Left cardiac atrium (tissue), 4 donors: ENCODE measurements at regions of chr1 and their contacts with region 1.

Region 1: DNA sequence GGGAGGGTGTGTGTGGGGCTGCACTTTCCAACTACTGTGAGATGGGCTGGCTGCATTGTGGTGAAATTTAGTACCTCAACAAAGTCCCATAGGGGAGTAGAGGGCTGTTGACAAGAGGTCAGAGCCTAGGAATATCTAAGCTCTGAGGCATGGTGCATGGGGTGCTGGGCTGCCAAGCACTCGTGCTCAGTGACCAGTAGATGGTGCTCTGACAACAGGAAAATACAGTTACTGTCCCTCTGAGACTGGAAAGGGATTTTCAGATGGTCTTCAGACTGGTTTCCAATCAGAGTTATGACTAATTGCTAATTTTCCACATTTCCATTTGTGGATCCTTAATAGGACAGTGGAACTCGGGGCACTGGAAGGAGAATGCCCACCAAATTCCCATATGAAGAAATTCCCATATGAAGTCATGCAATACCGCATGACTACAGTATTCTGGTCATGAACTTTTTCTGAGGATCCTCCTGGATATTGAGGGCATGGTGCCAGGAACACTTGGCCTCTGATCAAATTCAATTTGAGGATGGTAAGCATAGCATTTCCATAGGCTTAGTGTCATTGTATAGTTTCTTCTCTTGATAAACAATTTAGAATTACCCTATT is 4.1 kb upstream of the CACNA1E start:
- DNase-seq: peak; percentile 43
- ATAC-seq: peak; percentile 88 to 91

Region 2: GRCh38 chr1:181250038-181250437 is 229.2 kb before region 1 on chr1:
- intact Hi-C with region 1: no loop called
- DNase-seq: no peak
- ATAC-seq: no peak

Region 3: DNA sequence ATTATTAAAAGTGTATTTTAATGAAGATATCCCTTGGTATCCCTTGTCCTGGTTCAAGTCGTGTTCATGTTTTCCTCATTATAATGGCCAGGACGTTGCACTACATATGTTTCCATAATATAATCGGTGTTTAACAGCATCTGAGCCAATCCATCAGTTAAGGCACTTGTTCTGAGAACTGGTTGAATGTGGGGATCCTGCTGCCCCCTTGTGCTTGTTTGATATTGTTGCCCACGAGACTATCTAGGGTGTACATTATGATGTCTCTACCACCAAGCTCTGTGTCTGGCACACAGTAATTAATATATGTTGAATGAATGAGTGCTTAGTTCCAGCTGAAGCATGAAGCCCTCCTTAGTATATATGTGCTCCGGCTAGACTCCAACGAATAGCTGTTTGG is 197.0 kb after region 1 on chr1:
- intact Hi-C with region 1: loop called (anchors 1 to 5 kb)
- DNase-seq: no peak
- ATAC-seq: peak in 1 of 2 donors; percentile 38

Region 4: DNA sequence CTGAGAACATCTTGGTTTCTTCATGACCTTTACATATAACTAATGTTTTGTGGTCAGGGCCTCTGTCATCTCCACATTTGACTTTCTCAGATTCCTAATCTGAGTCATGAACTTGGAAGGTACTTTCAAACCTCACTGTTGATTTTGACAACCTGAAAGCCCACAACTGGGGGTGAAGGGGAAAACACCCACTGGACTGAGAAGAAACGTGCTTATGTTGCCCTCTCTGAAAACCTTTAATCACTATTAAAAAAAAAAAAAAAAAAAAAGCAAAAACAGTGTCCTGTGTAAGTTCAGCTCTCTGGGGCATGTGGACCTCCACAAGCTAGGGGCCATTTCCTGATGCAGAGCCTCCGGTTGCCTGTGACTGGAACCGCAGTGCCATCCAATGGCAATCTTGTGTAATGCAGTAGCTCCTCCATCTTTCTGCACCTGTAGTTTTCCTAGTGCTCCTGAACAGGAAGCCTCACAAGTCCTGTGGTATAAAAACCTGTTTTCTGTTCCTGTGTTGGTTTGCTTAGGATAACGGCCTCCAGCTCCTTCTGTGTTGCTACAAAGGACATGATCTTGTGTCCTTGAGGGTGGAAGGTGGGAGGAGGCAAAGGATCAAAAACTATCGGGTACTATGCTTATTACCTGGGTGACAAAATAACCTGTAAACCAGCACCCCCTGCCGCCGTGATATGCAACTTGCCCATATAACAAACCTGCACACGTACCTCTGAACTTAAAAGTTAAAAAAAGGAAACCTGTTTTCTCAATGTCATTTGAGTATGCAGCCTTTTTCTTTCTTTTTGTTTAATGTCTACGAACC is 457.7 kb after region 1 on chr1:
- intact Hi-C with region 1: loop called in 1 of 2 experiments (anchors 2 kb)
- DNase-seq: peak; percentile 30
- ATAC-seq: peak; percentile 27 to 48